Heart right ventricle (tissue), 16 donors: ENCODE measurements at regions of chr18 and their contacts with region 1.

Region 1: GRCh38 chr18:28666216-28666615 is 489.3 kb upstream of the CDH2 start:
- DNase-seq: no peak
- ATAC-seq: no peak
- H3K4me3 ChIP-seq: no peak overlapping the region
- H3K27ac ChIP-seq: no peak overlapping the region
- H3K4me1 ChIP-seq: no peaks in the 10 kb centered on the region
- H3K27me3 ChIP-seq: no peaks in the 10 kb centered on the region
- CTCF ChIP-seq: no peak

Region 2: GRCh38 chr18:28626757-28627156 is 39.5 kb before region 1 on chr18:
- intact Hi-C with region 1: no loop called
- DNase-seq: no peak
- ATAC-seq: no peak
- H3K4me3 ChIP-seq: no peak overlapping the region
- H3K27ac ChIP-seq: no peak overlapping the region
- H3K4me1 ChIP-seq: no peaks in the 10 kb centered on the region
- H3K27me3 ChIP-seq: no peaks in the 10 kb centered on the region
- CTCF ChIP-seq: no peak

Region 3: GRCh38 chr18:28705482-28705881 is 39.3 kb after region 1 on chr18:
- intact Hi-C with region 1: loop called in 1 of 10 experiments (anchors 2 kb)
- DNase-seq: no peak
- ATAC-seq: no peak
- H3K4me3 ChIP-seq: no peak overlapping the region
- H3K27ac ChIP-seq: no peak overlapping the region
- H3K4me1 ChIP-seq: no peaks in the 10 kb centered on the region
- H3K27me3 ChIP-seq: no peaks in the 10 kb centered on the region
- CTCF ChIP-seq: no peak